ENCODE measurements at regions of chr6 and their contacts with region 1.

Region 1: DNA sequence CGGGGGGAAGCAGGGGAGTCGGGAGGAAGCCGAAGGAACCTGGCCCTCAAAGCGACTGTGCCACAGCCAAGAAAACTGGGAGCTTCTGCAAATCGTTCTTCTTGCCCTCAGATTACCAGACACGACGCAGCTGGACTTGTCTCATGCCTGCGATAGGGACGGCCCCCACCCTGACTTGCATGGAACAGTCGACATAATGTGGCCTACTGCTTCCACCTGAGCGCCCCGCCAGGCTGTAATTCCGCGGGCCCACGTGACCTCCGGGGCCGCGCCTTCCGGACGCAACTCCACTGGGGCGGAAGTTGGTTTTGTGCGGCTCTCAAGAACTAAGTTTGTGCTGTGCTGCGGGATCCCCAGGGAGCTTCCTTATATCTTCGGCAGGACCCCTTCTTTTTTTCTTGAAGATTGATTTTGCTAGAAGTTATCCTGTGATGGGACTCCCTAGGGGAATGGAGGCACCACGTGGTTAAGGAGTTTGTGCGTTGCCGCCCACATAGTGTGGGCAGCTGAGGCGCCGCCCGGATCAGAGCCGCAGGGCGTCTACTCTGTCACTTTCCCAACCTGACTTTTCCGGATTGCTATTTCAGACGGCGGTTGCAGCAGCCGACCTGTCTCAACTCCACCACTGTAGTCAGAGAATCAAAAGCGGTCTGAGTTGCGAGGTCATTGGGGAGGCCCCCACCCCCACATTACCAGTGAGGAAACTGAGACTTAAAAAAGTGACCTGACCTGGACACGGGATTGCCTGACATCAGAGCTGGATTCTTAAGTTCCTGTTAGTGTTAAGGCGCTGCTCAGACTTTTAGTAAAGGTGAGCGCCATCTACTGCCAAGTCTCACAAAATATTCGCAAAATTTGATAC is 540 bp upstream of the CD164 start:
- DNase-seq: peak; percentile 91
- H3K4me3 Mint-ChIP-seq: peak overlapping the region; percentile 83
- H3K27ac Mint-ChIP-seq: peak overlapping the region; percentile 100
- H3K4me1 Mint-ChIP-seq: peaks cover 32% of the 10 kb centered on the region
- H3K27me3 Mint-ChIP-seq: no peaks in the 10 kb centered on the region
- CTCF ChIP-seq: peak; percentile 45

Region 2: DNA sequence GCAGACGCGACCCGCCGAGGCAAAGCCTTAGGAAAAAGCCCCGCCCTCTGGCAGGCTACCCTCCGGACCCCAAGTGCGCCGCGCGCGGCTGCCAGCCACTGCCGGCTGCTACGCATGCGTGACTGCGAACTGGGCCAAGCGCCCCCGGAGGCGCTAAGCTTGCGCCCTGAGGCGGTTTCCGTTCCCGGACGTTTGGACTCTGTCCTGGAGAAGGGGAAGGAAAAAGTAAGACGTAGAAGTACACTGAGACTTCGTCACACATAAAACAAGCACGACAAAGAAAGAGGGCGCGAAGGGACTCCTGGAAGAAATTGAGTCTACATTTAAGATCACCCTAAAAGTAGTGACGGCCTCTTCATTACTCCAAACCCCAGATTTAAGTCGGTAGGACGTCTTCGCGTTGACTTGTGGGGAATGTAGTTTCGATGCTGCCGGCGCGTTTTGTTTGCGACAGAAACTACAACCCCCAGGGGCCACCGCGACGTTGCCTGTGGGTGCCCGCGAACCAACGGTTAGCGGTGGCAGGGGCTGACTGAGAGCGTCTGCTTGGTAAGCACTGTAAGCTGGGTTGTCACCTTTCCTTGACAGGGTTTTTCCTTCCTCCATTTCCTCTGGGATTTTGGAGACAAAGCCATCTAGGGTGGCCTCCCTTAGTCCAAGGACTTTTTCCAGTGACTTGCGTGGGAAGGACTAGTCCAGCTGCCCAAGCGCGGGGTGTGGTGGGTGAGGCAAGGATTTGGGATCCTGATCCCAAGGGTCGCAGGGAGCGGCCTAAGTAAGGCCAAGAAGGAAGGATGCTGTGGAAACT is 287.6 kb before region 1 on chr6 and contains the start of gene CEP57L1:
- CTCF ChIA-PET with region 1: no interaction called
- intact Hi-C with region 1: loop called (anchors 10 kb)
- DNase-seq: peak; percentile 98
- H3K4me3 Mint-ChIP-seq: peak within 1 kb of the TSS; percentile 94
- H3K27ac Mint-ChIP-seq: peak within 1 kb of the TSS; percentile 94
- H3K4me1 Mint-ChIP-seq: peaks cover 28% of the 10 kb centered on the region
- H3K27me3 Mint-ChIP-seq: no peaks in the 10 kb centered on the region
- CTCF ChIP-seq: no peak
- total RNA-seq, gene CEP57L1: 10.1 and 13.2 TPM in 2 replicates

Region 3: GRCh38 chr6:109187399-109188114 is 195.2 kb before region 1 on chr6:
- CTCF ChIA-PET with region 1: interaction called, 22 read pairs
- intact Hi-C with region 1: loop called (anchors 1 kb)
- DNase-seq: peak; percentile 67
- H3K4me3 Mint-ChIP-seq: no peak overlapping the region
- H3K27ac Mint-ChIP-seq: no peak overlapping the region
- H3K4me1 Mint-ChIP-seq: no peaks in the 10 kb centered on the region
- H3K27me3 Mint-ChIP-seq: peaks cover 46% of the 10 kb centered on the region
- CTCF ChIP-seq: peak; percentile 82

Region 4: GRCh38 chr6:109229536-109229935 is 153.3 kb before region 1 on chr6:
- CTCF ChIA-PET with region 1: interaction called, 11 read pairs
- intact Hi-C with region 1: no loop called
- DNase-seq: peak; percentile 70
- H3K4me3 Mint-ChIP-seq: no peak overlapping the region
- H3K27ac Mint-ChIP-seq: no peak overlapping the region
- H3K4me1 Mint-ChIP-seq: peaks cover 34% of the 10 kb centered on the region
- H3K27me3 Mint-ChIP-seq: no peaks in the 10 kb centered on the region
- CTCF ChIP-seq: no peak

Region 5: DNA sequence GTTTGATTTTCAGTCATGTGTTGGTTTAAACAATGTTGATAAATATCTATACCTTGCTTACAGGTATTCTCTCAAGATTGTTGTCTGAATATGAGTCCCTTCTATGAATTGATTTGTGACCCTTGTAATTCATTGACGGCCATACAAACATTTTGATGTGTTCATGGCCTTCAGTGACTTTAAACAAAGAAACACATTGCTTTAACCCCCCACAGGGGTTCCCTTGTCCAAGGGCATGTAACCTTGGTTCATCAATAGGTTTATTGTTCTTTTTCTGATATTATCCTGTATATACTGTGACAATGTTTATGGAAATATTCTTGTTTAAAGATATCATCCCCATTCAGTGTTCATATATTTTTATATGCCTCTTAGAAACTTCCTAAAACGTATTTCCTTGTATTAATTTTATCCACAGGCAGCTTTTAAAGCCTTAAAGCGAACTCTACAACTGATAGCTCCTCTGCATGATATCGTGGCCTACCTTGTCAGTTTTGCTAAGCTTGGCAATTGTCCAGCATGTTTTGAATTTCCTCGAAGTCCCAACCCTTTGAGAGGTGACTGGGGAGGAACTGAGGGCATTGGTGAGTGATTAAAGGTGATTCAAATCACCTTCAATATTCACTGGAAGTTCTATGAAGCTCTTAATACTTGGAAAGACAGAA is 87.6 kb before region 1 on chr6:
- CTCF ChIA-PET with region 1: interaction called, 4 read pairs
- intact Hi-C with region 1: loop called (anchors 2 kb)
- DNase-seq: no peak
- H3K4me3 Mint-ChIP-seq: no peak overlapping the region
- H3K27ac Mint-ChIP-seq: peak overlapping the region; percentile 45
- H3K4me1 Mint-ChIP-seq: peaks cover 50% of the 10 kb centered on the region
- H3K27me3 Mint-ChIP-seq: no peaks in the 10 kb centered on the region
- CTCF ChIP-seq: no peak

Region 6: DNA sequence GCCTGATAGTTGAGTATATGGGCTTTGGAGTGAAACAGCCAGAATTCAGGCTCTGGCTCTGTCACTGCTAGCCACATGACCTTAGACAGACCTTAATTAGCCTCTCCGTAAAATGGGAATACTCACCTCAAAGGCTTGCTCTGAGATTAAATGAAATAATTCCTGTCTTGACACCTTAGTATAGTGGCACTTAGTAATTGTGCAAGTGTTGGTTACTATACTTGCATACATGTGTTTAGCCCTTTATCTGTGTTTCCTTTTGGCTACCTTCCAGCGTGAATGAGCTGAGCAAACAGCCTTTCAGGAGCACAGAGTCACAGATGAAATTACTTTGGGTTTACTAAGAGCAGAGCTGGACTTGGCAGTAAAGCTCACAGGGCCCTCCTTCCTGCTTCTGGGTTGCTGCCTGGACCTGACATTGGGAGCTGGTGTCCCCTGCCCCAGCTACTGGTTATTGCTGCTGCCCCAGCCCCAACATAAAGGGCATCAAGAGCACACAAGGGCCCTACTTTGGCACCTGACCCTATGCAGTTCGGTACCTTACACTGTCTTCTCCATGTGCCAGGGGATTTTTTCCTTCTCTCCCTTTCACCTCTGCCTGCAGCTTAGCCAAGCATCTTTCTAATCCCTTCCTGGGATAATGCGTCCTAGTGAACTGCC is 33.3 kb before region 1 on chr6:
- CTCF ChIA-PET with region 1: interaction called, 11 read pairs
- intact Hi-C with region 1: no loop called
- DNase-seq: peak; percentile 64
- H3K4me3 Mint-ChIP-seq: peak overlapping the region; percentile 24
- H3K27ac Mint-ChIP-seq: peak overlapping the region; percentile 73
- H3K4me1 Mint-ChIP-seq: peaks cover 38% of the 10 kb centered on the region
- H3K27me3 Mint-ChIP-seq: no peaks in the 10 kb centered on the region
- CTCF ChIP-seq: no peak

Region 7: DNA sequence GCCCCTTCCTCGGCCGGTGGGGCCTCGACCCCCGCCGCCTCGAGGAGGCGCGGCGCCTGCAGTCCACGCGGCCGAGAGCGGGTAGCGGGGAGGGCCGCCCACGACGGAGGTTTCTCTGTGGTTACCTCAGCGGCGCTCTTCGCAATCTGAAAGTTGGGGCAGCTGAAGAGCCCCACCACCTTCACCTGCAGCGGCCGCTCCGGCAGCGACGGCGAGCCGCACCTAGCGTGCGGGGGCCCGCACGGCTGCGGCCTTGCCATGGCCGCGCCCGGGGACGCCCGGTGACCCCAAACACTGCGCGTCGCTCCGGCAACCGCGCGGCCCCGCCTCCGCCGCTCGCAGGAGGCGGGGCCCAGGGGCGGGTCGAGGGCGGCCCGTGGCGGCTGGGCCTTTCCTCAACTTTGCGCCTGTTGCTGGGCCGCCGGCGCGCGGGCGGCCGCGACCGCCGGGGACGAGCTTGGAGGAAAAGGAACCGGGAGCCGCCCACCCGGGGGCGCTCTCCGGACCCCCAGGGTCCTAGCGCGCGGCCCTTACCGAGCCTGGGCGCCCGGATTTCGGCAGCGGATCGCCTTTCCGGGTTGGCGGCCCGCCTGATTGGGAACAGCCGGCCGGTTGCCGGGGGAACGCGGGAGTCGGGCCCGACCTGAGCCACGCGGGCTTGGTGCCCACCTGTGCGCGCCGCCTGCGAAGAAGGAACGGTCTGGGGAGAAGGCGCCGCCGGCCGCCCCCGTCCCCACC is 57.7 kb after region 1 on chr6 and contains the starts of genes PPIL6 and SMPD2:
- CTCF ChIA-PET with region 1: interaction called, 17 read pairs
- intact Hi-C with region 1: loop called (anchors 5 kb)
- DNase-seq: peak; percentile 89
- H3K4me3 Mint-ChIP-seq: peak within 1 kb of the TSS; percentile 93
- H3K27ac Mint-ChIP-seq: peak within 1 kb of the TSS; percentile 96
- H3K4me1 Mint-ChIP-seq: no peaks in the 10 kb centered on the region
- H3K27me3 Mint-ChIP-seq: no peaks in the 10 kb centered on the region
- CTCF ChIP-seq: no peak
- total RNA-seq, gene PPIL6: 2.5 and 2.6 TPM in 2 replicates
- total RNA-seq, gene SMPD2: 15.9 and 17.3 TPM in 2 replicates

Measured in Calu3 (cell line).